GM10248 (cell line): ENCODE measurements at regions of chr1 and their contacts with region 1.

Region 1: GRCh38 chr1:27940297-27940696 is 5.5 kb downstream of the SMPDL3B start:
- DNase-seq: peak; percentile 70
- CTCF ChIP-seq: peak; percentile 43

Region 2: DNA sequence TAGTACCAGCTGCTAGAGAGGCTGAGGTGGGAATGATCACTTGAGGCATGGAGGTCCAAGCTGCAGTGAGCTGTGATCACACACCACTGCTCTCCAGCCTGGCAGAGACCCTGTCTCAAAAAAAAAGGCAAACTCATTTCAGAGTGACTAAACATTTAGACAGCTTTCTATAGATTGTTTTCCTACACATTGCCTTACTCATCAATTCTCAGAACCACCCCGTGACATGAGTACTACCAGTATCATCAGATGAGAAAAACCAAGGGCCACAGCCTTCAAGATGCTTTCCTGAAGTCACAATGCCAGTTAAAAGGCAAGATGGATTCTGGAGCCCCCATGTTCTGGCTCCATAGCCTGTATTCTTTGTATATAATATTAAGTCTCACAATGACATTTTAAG is 27.9 kb before region 1 on chr1:
- CTCF ChIA-PET with region 1: no interaction called
- POLR2A ChIA-PET with region 1: no interaction called
- DNase-seq: no peak
- CTCF ChIP-seq: no peak

Region 3: GRCh38 chr1:27952147-27952546 is 11.8 kb after region 1 on chr1:
- CTCF ChIA-PET with region 1: interaction called, 17 read pairs
- POLR2A ChIA-PET with region 1: no interaction called
- DNase-seq: no peak
- CTCF ChIP-seq: no peak